ENCODE measurements at regions of chr10 and their contacts with region 1.

Region 1: GRCh38 chr10:68752711-68753350 is 31.8 kb downstream of the CCAR1 start:
- DNase-seq: no peak
- H3K4me3 ChIP-seq: no peak overlapping the region
- H3K27ac ChIP-seq: no peak overlapping the region
- H3K4me1 ChIP-seq: no peaks in the 10 kb centered on the region
- H3K27me3 ChIP-seq: no peaks in the 10 kb centered on the region
- CTCF ChIP-seq: no peak

Region 2: DNA sequence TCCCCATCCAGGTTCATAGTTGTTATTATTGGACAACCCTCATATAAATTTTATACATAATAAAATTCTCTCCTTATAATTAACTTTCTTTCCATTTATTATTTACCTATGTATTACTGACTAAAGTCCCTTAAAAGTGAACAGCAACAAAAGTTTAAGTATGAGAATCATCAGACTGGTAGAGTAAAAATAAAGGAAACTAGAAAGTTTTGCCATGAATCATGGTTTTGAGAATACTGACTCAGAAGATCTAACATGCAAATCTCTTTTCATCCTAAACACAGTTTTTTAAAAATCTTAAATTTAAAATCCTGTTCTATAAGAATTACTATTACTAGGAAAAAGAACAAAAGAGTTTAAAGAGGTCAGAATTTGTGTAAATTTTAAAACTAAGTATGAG is 709.8 kb before region 1 on chr10:
- CTCF ChIA-PET with region 1: no interaction called
- dilution Hi-C with region 1: no loop called
- in situ Hi-C with region 1: loop called in 1 of 2 experiments (anchors 25 kb)
- intact Hi-C with region 1: no loop called
- DNase-seq: peak; percentile 11
- H3K4me3 ChIP-seq: no peak overlapping the region
- H3K27ac ChIP-seq: no peak overlapping the region
- H3K4me1 ChIP-seq: no peaks in the 10 kb centered on the region
- H3K27me3 ChIP-seq: no peaks in the 10 kb centered on the region
- CTCF ChIP-seq: no peak

Region 3: GRCh38 chr10:68385740-68386139 is 367.1 kb before region 1 on chr10:
- CTCF ChIA-PET with region 1: no interaction called
- dilution Hi-C with region 1: no loop called
- in situ Hi-C with region 1: loop called in 1 of 2 experiments (anchors 25 kb)
- intact Hi-C with region 1: no loop called
- DNase-seq: no peak
- H3K4me3 ChIP-seq: no peak overlapping the region
- H3K27ac ChIP-seq: no peak overlapping the region
- H3K4me1 ChIP-seq: no peaks in the 10 kb centered on the region
- H3K27me3 ChIP-seq: no peaks in the 10 kb centered on the region
- CTCF ChIP-seq: no peak

Region 4: DNA sequence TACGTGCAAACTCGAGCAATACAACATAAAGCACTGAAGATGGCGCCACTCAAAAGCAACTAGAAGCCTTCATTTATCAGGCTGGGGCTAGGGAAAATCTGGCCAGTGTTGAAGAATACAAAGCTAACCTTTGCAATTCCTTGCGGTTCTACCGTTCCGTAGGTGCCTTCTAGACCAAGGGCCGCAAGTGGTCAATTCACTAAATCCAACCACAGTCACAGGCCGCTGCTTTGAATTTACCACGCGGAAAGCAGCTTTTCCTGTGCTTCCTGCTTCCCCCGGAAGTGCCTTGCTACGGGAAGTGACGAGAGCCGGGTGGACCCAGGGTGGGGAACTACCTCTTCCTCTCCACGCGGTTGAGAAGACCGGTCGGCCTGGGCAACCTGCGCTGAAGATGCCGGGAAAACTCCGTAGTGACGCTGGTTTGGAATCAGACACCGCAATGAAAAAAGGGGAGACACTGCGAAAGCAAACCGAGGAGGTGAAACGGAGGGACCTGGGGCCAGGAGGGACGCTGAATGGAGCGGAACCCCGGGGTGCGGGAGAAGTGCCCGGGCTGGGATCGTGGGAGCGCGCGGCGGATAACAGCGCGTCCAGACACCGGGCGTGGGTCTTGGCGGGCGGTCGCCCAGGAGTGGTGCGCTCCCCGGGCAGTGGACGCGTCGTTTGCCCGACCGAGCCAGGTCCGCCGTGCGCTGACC is 203.2 kb after region 1 on chr10 and contains the start of gene DDX21:
- CTCF ChIA-PET with region 1: no interaction called
- dilution Hi-C with region 1: no loop called
- in situ Hi-C with region 1: no loop called
- intact Hi-C with region 1: loop called (anchors 10 kb)
- DNase-seq: peak; percentile 90
- H3K4me3 ChIP-seq: peak within 1 kb of the TSS; percentile 67 to 82 (median 74)
- H3K27ac ChIP-seq: peak within 1 kb of the TSS; percentile 91
- H3K4me1 ChIP-seq: peaks cover 10% of the 10 kb centered on the region
- H3K27me3 ChIP-seq: no peaks in the 10 kb centered on the region
- CTCF ChIP-seq: peak; percentile 63 to 67
- total RNA-seq, gene DDX21: 92.9 to 142 TPM

Region 5: GRCh38 chr10:69009360-69009759 is 256.5 kb after region 1 on chr10:
- CTCF ChIA-PET with region 1: no interaction called
- dilution Hi-C with region 1: no loop called
- in situ Hi-C with region 1: no loop called
- intact Hi-C with region 1: no loop called
- DNase-seq: no peak
- H3K4me3 ChIP-seq: no peak overlapping the region
- H3K27ac ChIP-seq: no peak overlapping the region
- H3K4me1 ChIP-seq: no peaks in the 10 kb centered on the region
- H3K27me3 ChIP-seq: no peaks in the 10 kb centered on the region
- CTCF ChIP-seq: no peak

Measured in mammary epithelial cell (primary cell).